ENCODE measurements at regions of chr10 and their contacts with region 1.

Region 1: GRCh38 chr10:101095542-101096213 is 33.9 kb downstream of the KAZALD1 start:
- DNase-seq: peak; percentile 83
- ATAC-seq: peak; percentile 91
- H3K4me3 Mint-ChIP-seq: no peak overlapping the region
- H3K27ac Mint-ChIP-seq: no peak overlapping the region
- H3K4me1 Mint-ChIP-seq: no peaks in the 10 kb centered on the region
- H3K27me3 Mint-ChIP-seq: peaks cover 36% of the 10 kb centered on the region

Region 2: DNA sequence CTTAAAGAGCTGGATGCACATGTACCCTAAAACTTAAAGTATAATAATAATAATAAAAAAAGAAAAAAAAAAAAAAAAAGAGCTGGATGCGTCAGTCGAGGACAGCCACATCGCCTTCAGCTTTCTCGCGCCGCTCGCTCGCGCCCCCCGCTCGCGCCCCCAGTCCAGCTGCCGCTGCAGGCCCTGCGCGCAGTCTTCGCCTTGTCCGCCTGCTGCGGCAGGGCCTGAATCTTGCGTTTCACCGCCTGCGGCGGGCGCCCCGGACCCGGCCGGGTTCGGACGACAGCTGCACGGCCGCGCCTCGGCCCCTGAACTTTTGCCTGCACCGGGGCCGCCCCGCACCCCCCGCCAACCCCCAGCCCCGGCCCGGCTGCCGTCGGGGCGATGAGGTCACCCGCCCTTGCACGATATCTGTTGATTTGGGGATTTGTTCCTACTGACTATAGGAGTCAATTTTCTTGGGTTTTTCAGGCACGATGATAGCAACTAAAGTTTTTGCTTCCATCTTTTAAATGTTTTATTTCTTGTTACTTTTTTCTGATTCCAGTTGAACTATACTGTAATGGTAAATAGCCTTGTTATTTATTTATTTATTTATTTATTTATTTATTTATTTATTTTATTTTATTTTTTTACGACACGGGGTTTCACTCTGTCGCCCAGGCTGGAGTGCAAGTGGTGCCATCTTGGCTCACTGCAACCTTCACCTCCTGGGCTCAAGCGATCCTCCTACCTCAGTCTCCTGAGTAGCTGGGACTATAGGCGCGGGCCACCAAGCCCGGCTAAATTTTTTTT is 980.5 kb before region 1 on chr10:
- CTCF ChIA-PET with region 1: no interaction called
- DNase-seq: no peak
- ATAC-seq: no peak
- H3K4me3 Mint-ChIP-seq: no peak overlapping the region
- H3K27ac Mint-ChIP-seq: no peak overlapping the region
- H3K4me1 Mint-ChIP-seq: peaks cover 1% of the 10 kb centered on the region
- H3K27me3 Mint-ChIP-seq: peaks cover 30% of the 10 kb centered on the region

Region 3: DNA sequence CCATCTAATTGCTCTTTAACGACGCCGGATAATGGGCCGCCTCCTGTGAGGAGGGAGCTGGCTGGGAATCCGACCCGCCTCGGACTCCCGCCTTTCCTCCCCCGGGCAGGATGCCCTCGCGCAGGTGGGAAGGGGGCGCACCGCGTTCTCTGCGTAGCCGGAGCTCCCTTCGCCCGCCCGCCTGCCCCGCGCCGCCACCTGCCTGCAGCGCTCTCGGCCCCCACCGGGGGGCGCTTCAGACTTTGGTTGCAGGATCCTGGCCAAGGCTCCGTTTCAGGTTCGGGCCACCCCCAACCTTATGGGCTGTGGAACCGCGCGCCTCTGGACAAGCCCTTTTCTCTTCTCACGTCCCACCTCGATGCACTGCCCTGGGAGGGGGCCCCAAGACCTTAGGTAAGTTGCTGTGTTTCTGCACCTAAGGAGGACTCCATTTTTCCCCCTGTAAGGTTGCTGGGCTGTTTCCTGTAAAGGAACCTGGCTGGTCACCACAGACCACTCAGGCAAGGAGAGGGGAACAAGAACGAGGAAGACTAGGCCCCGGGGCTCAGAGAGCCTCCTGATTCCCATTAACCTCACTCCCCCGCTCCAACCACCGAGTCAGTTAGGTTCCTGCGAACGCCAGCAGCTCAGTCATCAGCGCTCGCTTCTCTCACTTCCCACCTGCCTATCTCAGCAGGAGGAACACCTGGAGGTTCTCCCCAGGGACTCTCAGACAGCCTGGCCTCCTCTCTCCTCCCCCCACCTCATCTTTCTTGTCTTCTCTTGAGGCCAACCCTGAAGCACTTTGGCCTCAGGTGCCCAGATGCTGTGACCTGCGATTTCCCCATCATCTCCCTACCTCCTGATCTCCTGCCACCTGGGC is 45.2 kb before region 1 on chr10:
- CTCF ChIA-PET with region 1: interaction called, 20 read pairs
- DNase-seq: peak; percentile 84
- ATAC-seq: peak; percentile 93
- H3K4me3 Mint-ChIP-seq: no peak overlapping the region
- H3K27ac Mint-ChIP-seq: no peak overlapping the region
- H3K4me1 Mint-ChIP-seq: peaks cover 27% of the 10 kb centered on the region
- H3K27me3 Mint-ChIP-seq: peaks cover 54% of the 10 kb centered on the region

Region 4: DNA sequence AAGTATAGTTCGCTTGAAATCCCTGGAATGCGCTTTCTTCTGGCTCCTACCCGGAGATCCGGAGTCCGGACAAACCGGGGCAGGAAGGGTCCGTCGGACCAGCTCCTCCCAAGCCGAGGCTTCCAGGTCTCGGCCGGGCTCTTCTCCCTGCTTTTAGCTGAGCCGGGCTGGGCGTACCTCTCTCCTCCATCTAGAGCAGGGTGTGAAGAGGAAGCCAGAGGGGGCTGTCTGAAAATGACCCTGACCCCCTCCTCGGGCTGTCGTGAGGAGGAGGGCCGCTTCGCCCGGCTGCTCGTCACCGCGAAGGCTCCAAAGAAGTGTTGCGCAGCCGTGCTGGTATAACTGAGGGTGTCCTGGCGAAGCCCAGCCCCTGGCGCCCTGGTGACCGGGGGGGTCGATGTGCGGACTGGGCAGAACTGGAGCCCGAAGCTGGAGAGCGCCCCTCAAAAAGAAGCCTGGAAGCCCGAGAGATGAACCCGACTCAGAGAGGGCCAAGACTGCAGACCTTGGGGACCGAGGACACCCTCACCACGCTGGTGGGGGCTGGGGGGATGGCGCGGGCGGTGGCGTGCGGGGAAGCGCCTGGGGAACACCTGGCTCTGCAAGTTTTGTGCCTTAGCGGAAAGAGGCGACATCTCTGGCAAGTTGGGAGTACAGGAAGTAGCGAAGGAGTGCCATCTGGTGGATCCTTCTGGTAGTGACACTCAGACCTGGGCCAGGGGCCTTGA is 28.2 kb before region 1 on chr10:
- CTCF ChIA-PET with region 1: interaction called, 10 read pairs
- DNase-seq: peak; percentile 85
- ATAC-seq: peak; percentile 64
- H3K4me3 Mint-ChIP-seq: peak overlapping the region; percentile 74
- H3K27ac Mint-ChIP-seq: no peak overlapping the region
- H3K4me1 Mint-ChIP-seq: peaks cover 22% of the 10 kb centered on the region
- H3K27me3 Mint-ChIP-seq: peaks cover 59% of the 10 kb centered on the region

Region 5: DNA sequence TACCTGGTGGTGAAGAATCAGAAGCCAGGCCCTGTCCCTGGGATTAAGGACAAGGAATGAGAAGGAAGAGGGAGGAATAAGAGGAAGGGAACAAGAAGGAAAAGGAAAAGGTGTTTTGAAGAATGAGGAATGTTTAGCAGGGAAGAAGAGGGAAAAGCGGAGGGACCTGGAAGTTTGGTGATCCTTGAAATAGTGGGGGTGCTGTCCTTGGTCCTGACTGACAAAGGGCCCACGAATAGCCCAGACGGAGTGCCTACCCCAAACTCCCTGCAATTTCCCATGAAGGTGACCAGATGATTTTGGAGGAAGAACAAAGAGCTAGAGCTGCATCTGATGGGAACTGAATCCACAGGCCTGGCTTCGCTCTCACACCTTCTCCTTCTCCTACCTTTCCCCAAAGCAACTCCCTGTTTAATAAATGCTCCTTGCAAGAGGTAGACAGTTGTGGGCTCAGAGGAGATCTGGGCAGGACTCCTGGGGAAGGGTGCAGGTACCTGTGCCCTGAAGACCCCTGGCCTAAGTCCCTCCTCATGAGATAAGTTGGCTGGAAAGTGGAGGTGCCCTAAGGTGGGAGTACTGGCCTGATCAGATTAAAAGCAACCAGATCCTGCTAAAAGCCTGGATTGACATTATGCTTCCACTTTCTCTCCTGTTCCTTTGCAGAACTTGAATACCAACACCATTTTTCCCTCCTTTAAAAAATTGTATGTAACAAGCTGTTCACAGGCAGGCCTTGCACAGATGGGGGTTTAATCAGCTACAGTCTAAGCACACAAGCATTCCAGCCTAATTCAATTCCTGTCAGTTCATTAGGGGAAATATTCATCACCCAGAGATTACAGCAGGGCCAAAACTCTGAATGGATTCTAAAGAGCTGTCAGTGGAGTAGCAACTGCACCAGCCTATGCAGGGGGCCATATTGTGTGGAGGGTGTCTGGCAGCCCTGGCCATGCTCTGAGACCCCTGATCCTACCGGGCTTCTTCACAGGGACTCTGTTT is 14.4 kb before region 1 on chr10:
- CTCF ChIA-PET with region 1: interaction called, 15 read pairs
- DNase-seq: no peak
- ATAC-seq: no peak
- H3K4me3 Mint-ChIP-seq: no peak overlapping the region
- H3K27ac Mint-ChIP-seq: no peak overlapping the region
- H3K4me1 Mint-ChIP-seq: no peaks in the 10 kb centered on the region
- H3K27me3 Mint-ChIP-seq: peaks cover 51% of the 10 kb centered on the region

Region 6: GRCh38 chr10:101130984-101131961 is 35.6 kb after region 1 on chr10 and contains the start of gene TLX1:
- CTCF ChIA-PET with region 1: interaction called, 12 read pairs
- DNase-seq: no peak
- ATAC-seq: no peak
- H3K4me3 Mint-ChIP-seq: no peak within 1 kb of the TSS
- H3K27ac Mint-ChIP-seq: no peak within 1 kb of the TSS
- H3K4me1 Mint-ChIP-seq: peaks cover 11% of the 10 kb centered on the region
- H3K27me3 Mint-ChIP-seq: peaks cover 91% of the 10 kb centered on the region
- total RNA-seq, gene TLX1: not detected